HEK293 (cell line): ENCODE measurements at regions of chr6 and their contacts with region 1.

Region 1: DNA sequence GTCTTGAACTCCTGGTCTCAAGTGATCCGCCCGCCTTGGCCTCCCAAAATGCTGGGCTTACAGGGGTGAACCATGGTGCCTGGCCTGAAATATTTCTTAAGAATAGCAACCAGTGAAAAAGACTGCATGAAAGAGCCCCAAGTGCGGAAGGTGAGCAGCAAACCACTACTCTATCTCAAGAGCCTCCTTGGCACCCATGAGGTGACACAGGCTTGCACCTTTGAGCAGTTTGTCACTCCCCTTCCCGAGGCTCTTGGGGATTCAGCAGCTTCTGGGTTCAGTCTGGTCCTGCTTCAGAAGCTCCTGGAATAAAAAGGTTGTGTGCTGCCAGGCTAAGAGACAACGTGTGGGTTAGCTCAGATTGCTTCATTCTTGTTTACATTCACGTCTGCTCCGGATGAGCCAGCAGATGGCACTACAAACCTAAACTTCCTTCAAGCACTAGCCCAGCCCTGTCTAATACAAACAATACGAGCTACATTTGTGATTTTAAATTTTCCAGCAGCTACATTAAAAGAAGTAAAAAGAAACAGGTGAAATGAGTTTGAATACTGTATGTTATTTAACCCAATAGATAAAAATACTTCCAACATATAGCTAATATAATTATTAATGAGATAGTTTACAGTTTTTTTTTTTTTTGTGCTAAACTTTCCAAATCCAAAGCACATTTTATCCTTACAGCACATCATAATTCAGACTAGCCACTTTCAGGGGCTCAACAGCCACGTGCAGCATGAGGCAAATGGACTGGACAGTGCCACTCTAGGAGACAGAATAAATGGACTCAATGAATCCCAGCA is 46.2 kb downstream of the GJA10 start:
- H3K4me3 ChIP-seq: no peak overlapping the region
- H3K27ac ChIP-seq: no peak overlapping the region
- H3K4me1 ChIP-seq: no peaks in the 10 kb centered on the region
- CTCF ChIP-seq: peak; percentile 63; the same call in 1 of the 2 replicates

Region 2: GRCh38 chr6:89416796-89417195 is 523.6 kb before region 1 on chr6:
- CTCF ChIA-PET with region 1: no interaction called
- POLR2A ChIA-PET with region 1: no interaction called
- H3K4me3 ChIP-seq: no peak overlapping the region
- H3K27ac ChIP-seq: no peak overlapping the region
- H3K4me1 ChIP-seq: peaks cover 5% of the 10 kb centered on the region
- CTCF ChIP-seq: no peak

Region 3: DNA sequence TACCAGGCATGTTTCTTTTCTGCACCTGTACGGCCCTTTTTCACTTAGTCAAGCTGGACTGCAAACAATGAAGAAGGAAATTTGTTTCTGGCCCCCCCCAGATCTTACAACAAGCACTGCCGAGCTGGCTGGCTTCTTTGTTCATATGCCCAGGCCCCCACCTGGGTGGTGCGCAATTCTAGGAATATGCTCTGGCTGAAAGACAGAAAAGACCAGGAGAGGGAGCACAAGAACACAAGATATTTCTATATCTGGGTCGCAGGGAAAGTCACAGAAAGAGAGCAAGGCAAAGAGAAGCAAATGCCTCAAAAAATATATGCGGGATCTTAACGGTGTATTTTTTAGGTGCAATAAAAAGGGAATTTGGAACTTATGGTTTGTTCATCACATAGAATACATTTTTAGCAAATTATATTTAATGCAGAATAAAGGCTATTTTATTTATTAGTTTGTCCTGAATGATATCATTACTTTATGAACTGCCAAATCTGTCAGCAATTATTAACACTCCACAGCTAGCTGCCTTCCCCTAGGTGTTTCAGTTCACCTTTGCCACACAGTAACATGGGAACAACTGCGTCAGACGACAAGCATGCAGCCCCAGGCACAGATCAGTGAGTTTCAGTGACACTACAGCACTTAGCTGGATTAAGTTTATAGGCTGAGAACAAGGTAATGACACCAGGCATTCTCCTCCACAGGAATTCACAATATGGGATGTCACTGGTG is 30.3 kb after region 1 on chr6:
- CTCF ChIA-PET with region 1: interaction called, 20 read pairs
- POLR2A ChIA-PET with region 1: no interaction called
- H3K4me3 ChIP-seq: no peak overlapping the region
- H3K27ac ChIP-seq: no peak overlapping the region
- H3K4me1 ChIP-seq: no peaks in the 10 kb centered on the region; the same call in 1 of the 2 replicates
- CTCF ChIP-seq: peak; percentile 47; the same call in 1 of the 2 replicates

Region 4: DNA sequence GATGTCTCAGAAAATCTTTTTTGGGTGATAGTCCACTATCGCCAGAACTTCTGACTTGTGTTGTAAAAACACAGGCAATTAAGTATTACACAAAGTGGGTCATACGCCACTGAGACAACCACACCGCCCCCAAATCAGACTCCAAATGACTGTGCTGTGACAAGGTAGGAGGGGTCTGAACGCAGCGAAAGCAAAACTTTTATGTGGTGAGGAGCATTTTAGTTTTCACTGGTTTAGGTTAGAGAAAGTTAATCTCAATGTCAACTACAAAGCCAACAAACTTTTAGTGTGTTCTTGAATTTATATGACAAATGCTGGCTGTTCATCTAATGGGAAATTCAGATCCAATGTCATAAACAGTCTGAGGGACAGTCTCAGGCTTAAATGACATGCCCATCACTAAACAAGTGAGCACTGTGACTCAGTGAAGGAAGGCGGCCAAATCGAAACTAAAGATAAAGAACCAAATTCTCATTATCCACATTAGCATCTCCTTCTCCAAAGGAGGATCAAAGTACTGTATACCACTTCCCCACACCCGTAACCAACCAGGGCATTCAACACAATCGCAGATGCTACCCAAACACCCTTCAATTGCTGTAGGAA is 140.6 kb after region 1 on chr6:
- CTCF ChIA-PET with region 1: interaction called, 14 read pairs
- POLR2A ChIA-PET with region 1: no interaction called
- H3K4me3 ChIP-seq: no peak overlapping the region
- H3K27ac ChIP-seq: no peak overlapping the region
- H3K4me1 ChIP-seq: no peaks in the 10 kb centered on the region
- CTCF ChIP-seq: no peak

Region 5: DNA sequence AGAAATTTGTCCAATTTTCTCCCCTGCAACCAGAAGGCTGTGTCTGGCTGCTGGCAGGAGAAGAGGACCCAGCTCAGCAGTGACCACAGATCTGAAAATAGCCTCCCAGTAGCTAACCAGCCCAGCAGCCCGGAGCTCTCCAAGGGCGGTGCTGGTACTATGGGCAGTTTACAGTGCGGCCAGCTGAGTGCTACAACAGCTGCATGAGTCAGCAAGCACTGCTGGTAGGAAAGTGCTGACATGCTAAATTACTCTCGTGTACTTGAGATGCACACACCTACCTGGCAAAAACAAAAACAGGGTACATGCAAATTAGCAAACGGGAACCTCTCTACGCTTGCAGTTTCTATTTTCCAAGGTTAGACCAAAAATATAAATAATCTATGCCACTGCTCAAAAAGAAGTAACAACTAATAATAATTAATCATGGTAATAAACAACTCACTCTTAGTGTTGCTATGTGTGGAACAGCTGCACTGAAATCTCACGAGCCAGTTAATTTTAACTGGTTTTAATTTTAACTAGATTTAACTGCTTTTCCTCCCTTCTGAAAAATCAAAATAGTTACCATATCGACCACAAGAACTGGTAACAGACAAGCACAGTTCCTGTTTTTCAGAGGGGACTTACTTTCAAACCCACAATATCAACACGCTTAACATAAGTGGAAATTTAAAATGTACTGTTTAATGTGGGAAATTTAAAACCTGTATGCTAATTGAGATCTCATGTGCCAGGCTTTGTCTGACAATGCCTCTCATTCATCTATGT is 345.4 kb after region 1 on chr6:
- CTCF ChIA-PET with region 1: interaction called, 33 read pairs
- POLR2A ChIA-PET with region 1: interaction called, 4 read pairs
- H3K4me3 ChIP-seq: 0 out of 2 replicates have a peak overlapping the region, but pooled peaks have one; percentile 2
- H3K27ac ChIP-seq: no peak overlapping the region
- H3K4me1 ChIP-seq: peaks cover 6% of the 10 kb centered on the region
- CTCF ChIP-seq: no peak

Region 6: GRCh38 chr6:90478789-90479602 is 538.6 kb after region 1 on chr6:
- CTCF ChIA-PET with region 1: interaction called, 185 read pairs
- POLR2A ChIA-PET with region 1: interaction called, 7 read pairs
- H3K4me3 ChIP-seq: no peak overlapping the region
- H3K27ac ChIP-seq: no peak overlapping the region
- H3K4me1 ChIP-seq: no peaks in the 10 kb centered on the region
- CTCF ChIP-seq: peak; percentile 88